Caco-2 (cell line): ENCODE measurements at regions of chr19 and their contacts with region 1.

Region 1: DNA sequence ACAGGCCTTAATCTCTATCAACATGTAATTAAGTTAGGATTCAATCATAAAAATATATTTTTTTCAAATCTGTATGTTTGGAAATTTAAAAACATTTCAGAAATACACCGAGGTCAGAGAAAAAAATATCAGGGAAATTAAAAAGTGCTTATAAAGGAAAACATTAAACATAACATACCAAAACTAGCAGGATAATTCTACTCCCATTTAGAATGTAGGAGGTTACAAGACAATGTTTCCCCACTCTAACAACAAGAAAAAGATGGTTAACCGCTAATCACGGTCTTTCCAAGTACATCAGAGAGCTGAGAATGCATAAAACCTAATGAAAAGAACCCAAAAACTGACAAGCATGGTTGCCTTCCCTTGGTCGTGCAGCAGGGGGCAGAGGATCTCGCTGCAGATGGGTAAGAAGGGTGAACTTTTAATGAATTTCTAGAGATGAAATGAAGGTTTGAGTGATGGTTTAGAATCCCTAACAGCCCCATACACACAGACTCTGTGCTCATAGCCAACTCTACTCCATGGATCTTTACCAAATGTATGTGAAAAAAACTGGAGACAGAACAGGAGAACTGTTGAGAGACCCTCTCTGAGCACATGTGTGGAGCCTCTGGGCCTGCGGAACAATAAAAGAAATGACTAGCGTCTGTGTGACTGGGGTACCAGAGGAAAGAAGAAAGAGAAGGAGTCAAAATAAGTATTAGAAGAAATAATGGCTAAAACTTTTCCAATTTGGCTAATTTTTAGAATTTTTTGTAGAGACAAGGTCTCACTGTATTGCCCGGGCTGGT is 51.3 kb upstream of the LSM14A start:
- DNase-seq: peak in 1 of 2 experiments; percentile 62
- H3K4me3 ChIP-seq: no peak overlapping the region
- H3K4me3 Mint-ChIP-seq: no peak overlapping the region
- H3K27ac Mint-ChIP-seq: no peak overlapping the region
- H3K4me1 ChIP-seq: no peaks in the 10 kb centered on the region
- H3K4me1 Mint-ChIP-seq: no peaks in the 10 kb centered on the region
- H3K27me3 ChIP-seq: no peaks in the 10 kb centered on the region
- H3K27me3 Mint-ChIP-seq: peaks cover 11% of the 10 kb centered on the region
- CTCF ChIP-seq: peak; percentile 86 to 87

Region 2: GRCh38 chr19:34145741-34146202 is 24.7 kb after region 1 on chr19:
- CTCF ChIA-PET with region 1: interaction called, 16 read pairs
- POLR2A ChIA-PET with region 1: no interaction called
- intact Hi-C with region 1: loop called (anchors 1 kb)
- DNase-seq: peak; percentile 58 to 70
- H3K4me3 ChIP-seq: no peak overlapping the region
- H3K4me3 Mint-ChIP-seq: no peak overlapping the region
- H3K27ac Mint-ChIP-seq: no peak overlapping the region
- H3K4me1 ChIP-seq: no peaks in the 10 kb centered on the region; the same call in 1 of the 2 replicates
- H3K4me1 Mint-ChIP-seq: peaks cover 5% of the 10 kb centered on the region
- H3K27me3 ChIP-seq: no peaks in the 10 kb centered on the region
- H3K27me3 Mint-ChIP-seq: no peaks in the 10 kb centered on the region
- CTCF ChIP-seq: peak; percentile 73 to 76

Region 3: DNA sequence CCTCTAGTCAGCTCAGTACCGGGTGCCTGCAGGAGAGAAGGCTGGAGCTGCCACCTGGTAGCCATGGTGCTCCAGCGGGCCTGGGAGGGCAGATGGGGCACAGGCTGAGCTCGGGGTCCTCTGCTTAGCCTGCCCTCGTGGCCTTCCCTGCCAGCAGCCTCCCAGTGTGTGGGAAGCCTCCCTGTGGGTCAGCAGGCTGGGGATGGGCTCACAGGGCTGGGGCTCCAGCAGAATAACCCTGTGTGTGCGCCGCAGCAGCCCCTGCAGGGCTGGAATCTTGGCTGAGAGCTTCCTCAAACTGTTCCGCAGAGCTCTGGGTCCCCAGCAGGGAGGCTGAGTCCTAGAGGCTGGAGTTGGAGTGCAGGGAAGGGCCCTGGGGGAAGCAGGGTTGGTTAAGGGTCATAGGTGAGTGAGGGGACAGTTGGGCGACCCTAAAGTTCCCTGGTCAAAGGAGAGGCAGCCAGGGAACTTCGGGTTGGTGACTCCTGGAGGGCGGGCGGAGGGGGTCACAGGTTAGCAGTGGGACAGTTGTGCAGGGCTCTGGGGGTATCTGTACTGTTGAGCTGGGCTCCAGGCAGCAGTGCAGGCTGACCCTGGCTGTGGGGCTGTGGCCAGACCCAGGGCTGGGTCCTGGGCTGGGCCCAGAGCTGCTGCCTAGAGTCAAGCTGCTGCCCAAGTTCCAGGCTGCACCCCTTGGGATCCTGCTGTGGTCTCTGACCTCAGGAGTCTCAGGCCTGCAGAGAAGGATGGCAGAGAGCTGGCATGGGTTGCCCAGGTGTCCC is 1668.3 kb after region 1 on chr19:
- CTCF ChIA-PET with region 1: no interaction called
- POLR2A ChIA-PET with region 1: interaction called, 13 read pairs
- intact Hi-C with region 1: no loop called
- DNase-seq: no peak
- H3K4me3 ChIP-seq: no peak overlapping the region
- H3K4me3 Mint-ChIP-seq: no peak overlapping the region
- H3K27ac Mint-ChIP-seq: no peak overlapping the region
- H3K4me1 ChIP-seq: no peaks in the 10 kb centered on the region
- H3K4me1 Mint-ChIP-seq: no peaks in the 10 kb centered on the region
- H3K27me3 ChIP-seq: no peaks in the 10 kb centered on the region
- H3K27me3 Mint-ChIP-seq: peaks cover 5% of the 10 kb centered on the region
- CTCF ChIP-seq: no peak